Activated B cell treated with CpG ODN at 0.5 μM for 24 hours (primary cell): ENCODE measurements at regions of chr19 and their contacts with region 1.

Region 1: DNA sequence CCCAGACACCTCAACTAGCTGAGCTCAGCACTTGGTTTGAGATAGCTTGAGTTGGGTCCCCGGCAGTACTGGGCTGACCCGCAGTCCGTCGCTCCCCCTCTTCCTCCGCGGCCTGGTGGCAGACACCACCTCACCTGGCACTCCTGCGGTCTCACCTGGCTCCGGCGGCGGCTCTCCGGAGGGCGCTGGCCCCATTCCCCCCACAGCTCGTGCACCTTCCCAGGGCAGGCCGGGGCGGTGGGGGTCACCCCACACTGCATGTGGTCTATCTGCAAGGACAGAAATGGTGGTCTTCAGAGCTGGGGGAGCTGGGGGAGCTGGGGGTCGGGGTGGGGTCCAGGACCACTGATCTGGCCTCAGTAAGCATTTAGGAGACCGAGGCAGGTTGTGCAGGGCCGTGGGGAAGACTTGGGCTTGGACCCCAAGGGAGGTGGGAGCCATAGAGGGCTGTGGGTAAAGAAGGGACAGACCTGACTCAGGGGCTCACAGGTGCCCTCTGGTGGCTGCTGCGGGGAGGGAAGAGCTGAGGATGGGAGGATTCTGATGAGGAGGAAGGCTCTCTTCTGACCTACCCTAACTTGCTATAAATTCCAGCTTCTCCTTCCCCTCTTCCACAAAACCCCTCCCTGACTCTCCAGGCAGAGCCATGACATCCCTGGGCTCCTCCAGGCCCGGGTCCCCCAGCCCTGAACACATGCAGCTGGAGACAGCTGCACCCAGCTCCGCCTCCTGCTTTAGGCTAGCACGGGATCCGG is 6.7 kb upstream of the PLIN4 start:
- DNase-seq: peak; percentile 60
- ATAC-seq: peak; percentile 82
- H3K4me3 Mint-ChIP-seq: no peak overlapping the region
- H3K27ac Mint-ChIP-seq: no peak overlapping the region
- H3K4me1 Mint-ChIP-seq: no peaks in the 10 kb centered on the region
- H3K27me3 Mint-ChIP-seq: peaks cover 6% of the 10 kb centered on the region
- CTCF ChIP-seq: peak; percentile 28

Region 2: DNA sequence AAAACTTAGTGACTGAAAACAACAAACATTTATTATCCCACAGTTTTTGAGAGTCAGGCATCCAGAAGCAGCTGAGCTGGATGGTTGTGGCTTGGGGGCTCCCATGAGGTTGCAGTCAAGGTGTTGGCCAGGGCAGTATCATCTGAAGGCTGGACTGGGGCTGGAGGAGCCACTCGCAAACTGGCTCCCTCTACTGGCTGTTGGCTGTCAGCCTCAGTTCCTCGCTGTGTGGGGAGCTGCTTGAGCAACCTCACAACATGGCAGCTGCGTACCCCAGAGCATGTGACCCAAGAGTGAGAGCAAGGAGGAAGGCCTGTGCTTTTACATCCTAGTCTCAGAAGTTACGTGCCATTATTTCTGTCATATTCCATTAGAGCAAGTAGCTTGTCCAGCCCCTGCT is 268.4 kb before region 1 on chr19:
- CTCF ChIA-PET with region 1: no interaction called
- POLR2A ChIA-PET with region 1: no interaction called
- intact Hi-C with region 1: no loop called
- DNase-seq: no peak
- ATAC-seq: no peak
- H3K4me3 Mint-ChIP-seq: no peak overlapping the region
- H3K27ac Mint-ChIP-seq: no peak overlapping the region
- H3K4me1 Mint-ChIP-seq: peaks cover 2% of the 10 kb centered on the region
- H3K27me3 Mint-ChIP-seq: no peaks in the 10 kb centered on the region
- CTCF ChIP-seq: no peak

Region 3: DNA sequence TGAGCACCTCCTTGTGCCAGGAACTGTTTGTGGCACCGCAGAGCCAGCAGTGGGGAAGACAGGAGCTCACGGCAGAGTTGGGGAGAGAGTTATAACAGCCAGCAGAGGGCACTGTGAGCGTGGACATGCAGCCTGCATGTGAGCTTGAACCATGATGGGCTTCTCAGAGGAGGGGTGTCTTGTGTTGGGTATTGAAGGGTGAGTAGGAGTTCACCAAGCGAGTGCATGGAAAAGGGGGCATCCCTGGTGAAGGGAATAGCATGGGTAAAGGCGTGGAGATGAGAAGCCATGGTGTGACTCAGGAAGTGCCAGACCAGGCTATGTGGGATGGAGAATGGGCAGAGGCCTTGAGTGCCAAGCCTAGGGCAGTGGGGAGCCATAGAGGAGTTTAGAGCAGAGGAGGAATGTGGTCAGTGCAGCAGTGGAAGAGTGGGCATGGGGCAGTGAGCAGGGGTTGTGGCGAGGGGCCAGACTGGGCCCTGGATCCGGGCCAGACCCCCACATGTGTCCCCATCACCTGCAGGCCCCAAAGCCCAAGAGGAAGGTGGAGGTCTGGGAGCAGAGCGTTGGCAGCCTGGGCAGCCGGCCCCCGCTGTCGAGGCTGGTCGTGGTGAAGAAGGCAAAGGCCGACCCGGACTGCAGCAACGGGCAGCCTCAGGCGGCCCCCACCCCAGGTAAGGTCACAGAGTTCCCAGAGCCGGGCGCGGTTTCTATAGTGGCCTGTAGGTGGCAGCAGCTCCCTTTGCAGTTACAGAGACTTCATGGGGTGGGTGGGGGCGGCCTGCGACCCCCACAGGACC is 257.7 kb before region 1 on chr19:
- CTCF ChIA-PET with region 1: interaction called, 40 read pairs
- POLR2A ChIA-PET with region 1: no interaction called
- intact Hi-C with region 1: loop called (anchors 1 kb)
- DNase-seq: peak; percentile 55
- ATAC-seq: peak; percentile 75
- H3K4me3 Mint-ChIP-seq: no peak overlapping the region
- H3K27ac Mint-ChIP-seq: no peak overlapping the region
- H3K4me1 Mint-ChIP-seq: peaks cover 15% of the 10 kb centered on the region
- H3K27me3 Mint-ChIP-seq: no peaks in the 10 kb centered on the region
- CTCF ChIP-seq: no peak

Region 4: GRCh38 chr19:5345895-5346386 is 821.0 kb after region 1 on chr19:
- CTCF ChIA-PET with region 1: no interaction called
- POLR2A ChIA-PET with region 1: no interaction called
- intact Hi-C with region 1: no loop called
- DNase-seq: no peak
- ATAC-seq: no peak
- H3K4me3 Mint-ChIP-seq: no peak overlapping the region
- H3K27ac Mint-ChIP-seq: no peak overlapping the region
- H3K4me1 Mint-ChIP-seq: peaks cover 6% of the 10 kb centered on the region
- H3K27me3 Mint-ChIP-seq: peaks cover 13% of the 10 kb centered on the region
- CTCF ChIP-seq: no peak